ENCODE measurements at regions of chr2 and their contacts with region 1.

Region 1: DNA sequence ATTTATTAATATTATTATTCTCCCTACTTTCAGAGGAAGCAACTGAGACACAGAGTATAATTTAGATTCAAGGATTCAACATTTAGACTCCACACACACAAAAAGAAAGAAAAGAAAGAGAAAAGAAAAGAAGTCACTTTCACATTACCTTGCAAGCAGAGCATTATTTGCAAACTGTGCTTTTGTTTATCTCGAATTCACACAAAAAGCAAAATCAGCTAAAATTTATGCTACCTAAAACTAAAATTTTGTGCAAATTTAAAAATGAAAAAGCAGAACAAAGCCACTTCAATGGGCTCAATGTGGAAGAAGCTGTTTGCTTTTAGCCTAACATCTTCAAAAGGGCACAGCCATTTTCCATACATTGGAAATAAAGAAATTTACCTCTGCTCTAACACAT is 1282.7 kb upstream of the GYPC start:
- DNase-seq: no peak
- ATAC-seq: no peak

Region 2: DNA sequence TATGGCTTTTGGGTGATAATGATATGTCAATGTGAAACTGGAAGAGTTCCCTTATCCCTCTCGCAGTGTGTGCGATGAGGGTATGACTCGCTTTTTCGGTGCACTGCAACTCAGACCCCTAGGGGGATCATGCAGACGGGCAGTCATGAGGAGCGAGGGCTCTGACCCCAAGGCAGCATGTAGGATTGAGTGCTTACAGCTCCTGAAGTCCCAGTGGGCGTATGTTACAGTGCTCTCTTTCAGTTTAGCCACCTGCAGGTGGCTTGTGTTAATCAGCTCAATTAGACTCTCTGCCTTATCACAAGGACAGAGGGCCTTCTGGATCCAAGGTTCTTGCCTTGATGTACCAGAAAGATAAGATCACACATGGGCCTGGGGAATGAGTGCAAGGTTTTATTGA is 12.8 kb after region 1 on chr2:
- intact Hi-C with region 1: loop called (anchors 1 kb)
- DNase-seq: no peak
- ATAC-seq: no peak